GM12878 (cell line): ENCODE measurements at regions of chr5 and their contacts with region 1.

Region 1: DNA sequence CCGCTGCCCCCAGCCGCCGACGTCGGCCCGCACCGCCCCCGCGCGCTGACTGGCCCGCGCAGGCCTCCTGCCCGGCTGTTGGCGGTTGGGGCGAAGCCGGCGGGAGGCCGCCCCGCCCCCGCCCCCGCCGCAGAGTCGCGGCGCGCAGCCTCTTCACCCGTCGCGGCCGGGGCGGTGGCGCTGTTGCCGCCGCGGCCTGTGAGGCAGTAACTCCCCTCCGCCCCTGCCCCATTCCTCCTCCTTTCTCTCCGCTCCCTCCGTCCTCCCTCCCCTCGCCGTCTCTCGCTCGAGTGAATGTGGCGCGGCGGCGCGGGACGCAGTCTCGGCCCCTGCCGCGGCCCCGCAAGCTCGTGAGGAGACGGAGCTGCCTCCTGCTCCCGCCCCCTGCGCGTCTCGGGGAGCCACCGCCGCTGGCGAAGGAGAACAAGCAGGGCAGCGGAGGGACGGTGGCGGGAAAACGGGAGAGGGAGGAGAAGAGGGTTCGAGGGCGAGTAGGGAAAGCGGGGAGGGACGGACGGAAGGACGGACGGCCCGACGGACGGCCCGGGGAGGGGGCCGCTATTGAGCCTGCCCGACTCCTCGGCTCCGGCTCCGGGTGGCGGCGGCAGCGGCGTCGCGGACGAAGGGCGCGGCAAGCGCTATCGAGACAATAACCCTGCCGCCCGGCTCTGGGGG is 637 bp upstream of the ERBIN start:
- DNase-seq: no peak
- ATAC-seq: peak; percentile 75
- H3K4me3 ChIP-seq: peak overlapping the region; percentile 85
- H3K27ac ChIP-seq: peak overlapping the region; percentile 96
- H3K4me1 ChIP-seq: 0 out of 2 replicates have a peak, but pooled peaks cover 5% of the 10 kb centered on the region
- H3K27me3 ChIP-seq: no peaks in the 10 kb centered on the region
- CTCF ChIP-seq: peak; percentile 31 to 52 (median 32); a peak in 5 of 6 replicates
- EP300 ChIP-seq: 0 out of 4 replicates have a peak, but pooled peaks of 1 of the 2 experiments have one; percentile 15
- POLR2A ChIP-seq: peak; percentile 87
- RAD21 ChIP-seq: peak; percentile 28; the same call in 1 of the 2 replicates

Region 2: DNA sequence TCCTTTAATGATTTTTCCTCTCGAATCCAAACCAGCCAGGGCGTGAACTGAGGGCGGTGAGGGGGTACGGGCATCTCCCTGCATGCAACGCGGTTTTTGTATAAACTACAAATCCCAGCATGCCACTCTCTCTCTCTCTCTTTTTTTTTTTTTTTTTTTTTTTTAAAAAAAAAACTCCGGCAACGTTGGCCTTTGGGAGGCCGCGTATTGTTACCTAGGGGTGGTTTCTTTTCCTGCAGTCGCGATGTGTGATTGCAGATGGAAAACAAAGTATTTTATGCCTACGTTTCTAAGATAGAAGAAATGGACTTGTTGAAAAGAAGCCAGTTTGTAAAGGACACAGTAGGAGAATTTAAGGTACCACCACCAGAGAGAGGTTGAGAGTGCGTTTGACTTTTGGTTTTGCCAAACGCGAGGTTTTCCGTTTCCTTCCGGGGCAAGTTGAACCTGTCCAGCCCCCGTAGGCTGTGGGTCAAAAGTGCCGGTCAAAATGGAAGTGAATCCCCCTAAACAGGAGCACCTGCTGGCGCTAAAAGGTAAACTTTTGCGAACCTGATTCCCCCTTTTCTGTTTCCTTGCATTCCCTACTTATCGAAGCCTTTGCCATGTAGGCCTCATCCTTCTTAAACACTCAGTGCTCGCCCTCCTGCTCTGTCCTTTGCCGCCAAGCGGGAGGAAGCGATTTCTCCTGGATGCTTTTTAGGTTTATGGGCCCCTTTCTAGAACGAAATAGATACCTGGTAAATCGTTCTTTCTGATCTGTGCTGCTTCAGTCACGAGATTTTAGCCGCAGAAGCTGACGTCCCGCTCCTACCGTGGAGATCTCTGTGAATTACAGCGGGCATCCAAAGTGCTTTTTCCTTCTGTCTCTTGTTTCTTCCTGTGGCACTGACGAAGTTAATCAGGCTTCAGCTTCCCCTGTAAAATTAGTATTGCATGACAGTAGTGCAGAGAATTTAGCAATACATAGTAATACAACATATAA is 300.9 kb before region 1 on chr5 and contains the starts of genes SHLD3 and TRAPPC13:
- CTCF ChIA-PET with region 1: no interaction called
- POLR2A ChIA-PET with region 1: interaction called, 3 read pairs
- RAD21 ChIA-PET with region 1: no interaction called
- SMC1A ChIA-PET with region 1: no interaction called
- in situ Hi-C with region 1: no loop called
- intact Hi-C with region 1: loop called (anchors 2 kb)
- DNase-seq: peak; percentile 85
- ATAC-seq: peak; percentile 84
- H3K4me3 ChIP-seq: peak within 1 kb of the TSS; percentile 88
- H3K27ac ChIP-seq: peak within 1 kb of the TSS; percentile 83
- H3K4me1 ChIP-seq: no peaks in the 10 kb centered on the region
- H3K27me3 ChIP-seq: no peaks in the 10 kb centered on the region
- CTCF ChIP-seq: 0 out of 6 replicates have a peak, but pooled peaks of 1 of the 3 experiments have one; percentile 6
- EP300 ChIP-seq: no peak
- POLR2A ChIP-seq: peak; percentile 60
- RAD21 ChIP-seq: no peak
- polyA plus RNA-seq, gene SHLD3: 5.7 to 9.2 TPM
- polyA plus RNA-seq, gene TRAPPC13: 23.7 to 35.6 TPM

Region 3: GRCh38 chr5:65742565-65743231 is 183.0 kb before region 1 on chr5:
- CTCF ChIA-PET with region 1: interaction called, 4 read pairs
- POLR2A ChIA-PET with region 1: interaction called, 7 read pairs
- RAD21 ChIA-PET with region 1: interaction called, 3 read pairs
- SMC1A ChIA-PET with region 1: interaction called, 3 read pairs
- in situ Hi-C with region 1: no loop called
- intact Hi-C with region 1: loop called (anchors 5 kb)
- DNase-seq: peak; percentile 21
- ATAC-seq: peak; percentile 95
- H3K4me3 ChIP-seq: no peak overlapping the region
- H3K27ac ChIP-seq: no peak overlapping the region
- H3K4me1 ChIP-seq: no peaks in the 10 kb centered on the region; the same call in 1 of the 2 replicates
- H3K27me3 ChIP-seq: no peaks in the 10 kb centered on the region
- CTCF ChIP-seq: peak; percentile 63 to 74 (median 65)
- EP300 ChIP-seq: no peak; a peak in 1 of 4 replicates
- POLR2A ChIP-seq: no peak
- RAD21 ChIP-seq: peak; percentile 87

Region 4: DNA sequence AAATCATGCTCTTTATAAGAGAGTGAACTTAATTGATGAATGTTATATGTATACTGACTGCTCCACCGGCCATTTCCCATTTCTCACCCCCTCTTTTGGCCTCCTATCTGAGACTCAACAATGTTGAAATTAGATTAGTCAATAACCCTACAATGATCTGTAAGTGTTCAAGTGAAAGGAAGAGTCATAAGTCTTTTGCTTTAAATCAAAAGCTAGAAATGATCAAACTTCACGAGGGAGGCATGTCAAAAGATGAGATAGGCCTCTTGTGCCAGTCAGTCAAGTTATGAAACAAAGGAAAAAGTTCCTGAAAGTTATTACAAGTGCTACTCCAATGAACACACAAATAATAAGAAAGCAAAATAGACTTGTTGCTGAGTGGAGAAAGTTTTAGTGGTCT is 120.6 kb before region 1 on chr5:
- CTCF ChIA-PET with region 1: no interaction called
- POLR2A ChIA-PET with region 1: no interaction called
- RAD21 ChIA-PET with region 1: no interaction called
- SMC1A ChIA-PET with region 1: no interaction called
- in situ Hi-C with region 1: no loop called
- intact Hi-C with region 1: no loop called
- DNase-seq: no peak
- ATAC-seq: no peak
- H3K4me3 ChIP-seq: no peak overlapping the region
- H3K27ac ChIP-seq: no peak overlapping the region
- H3K4me1 ChIP-seq: no peaks in the 10 kb centered on the region
- H3K27me3 ChIP-seq: no peaks in the 10 kb centered on the region
- CTCF ChIP-seq: no peak
- EP300 ChIP-seq: no peak
- POLR2A ChIP-seq: no peak
- RAD21 ChIP-seq: no peak

Region 5: GRCh38 chr5:65961633-65962032 is 35.9 kb after region 1 on chr5:
- CTCF ChIA-PET with region 1: interaction called, 3 read pairs
- POLR2A ChIA-PET with region 1: interaction called, 4 read pairs
- RAD21 ChIA-PET with region 1: interaction called, 5 read pairs
- SMC1A ChIA-PET with region 1: interaction called, 3 read pairs
- in situ Hi-C with region 1: no loop called
- intact Hi-C with region 1: loop called (anchors 5 kb)
- DNase-seq: peak; percentile 48
- ATAC-seq: peak; percentile 94
- H3K4me3 ChIP-seq: no peak overlapping the region
- H3K27ac ChIP-seq: no peak overlapping the region
- H3K4me1 ChIP-seq: peaks cover 11% of the 10 kb centered on the region
- H3K27me3 ChIP-seq: no peaks in the 10 kb centered on the region
- CTCF ChIP-seq: no peak
- EP300 ChIP-seq: peak in 1 of 2 experiments; percentile 29; a peak in 1 of 4 replicates
- POLR2A ChIP-seq: no peak
- RAD21 ChIP-seq: no peak

Region 6: DNA sequence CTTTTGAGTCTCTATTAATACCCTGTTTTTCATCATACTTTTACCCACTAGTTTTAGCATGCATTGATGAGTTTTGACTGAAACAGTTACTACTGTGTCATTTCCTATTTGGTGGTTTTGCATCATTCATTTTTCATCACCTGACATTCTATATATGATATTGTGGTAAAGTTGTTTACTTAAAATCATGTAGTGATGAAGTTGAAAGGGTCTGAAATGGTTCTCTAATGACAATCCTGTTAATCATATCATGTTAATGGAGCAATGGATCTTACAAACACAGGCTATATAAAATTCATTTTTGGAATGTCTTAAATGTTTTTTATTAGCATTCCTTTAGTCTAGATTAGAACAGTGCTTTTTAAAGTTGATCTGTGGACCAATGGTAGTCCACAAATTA is 84.7 kb after region 1 on chr5:
- CTCF ChIA-PET with region 1: no interaction called
- POLR2A ChIA-PET with region 1: interaction called, 6 read pairs
- RAD21 ChIA-PET with region 1: no interaction called
- SMC1A ChIA-PET with region 1: no interaction called
- in situ Hi-C with region 1: no loop called
- intact Hi-C with region 1: loop called (anchors 5 kb)
- DNase-seq: peak; percentile 12
- ATAC-seq: peak; percentile 79
- H3K4me3 ChIP-seq: no peak overlapping the region; the same call in 1 of the 2 replicates
- H3K27ac ChIP-seq: peak overlapping the region; percentile 34; the same call in 1 of the 2 replicates
- H3K4me1 ChIP-seq: peaks cover 5% of the 10 kb centered on the region; the same call in 1 of the 2 replicates
- H3K27me3 ChIP-seq: no peaks in the 10 kb centered on the region
- CTCF ChIP-seq: no peak
- EP300 ChIP-seq: peak in 1 of 2 experiments; percentile 50; a peak in 1 of 4 replicates
- POLR2A ChIP-seq: no peak
- RAD21 ChIP-seq: no peak